A673 (cell line): ENCODE measurements at regions of chr3 and their contacts with region 1.

Region 1: DNA sequence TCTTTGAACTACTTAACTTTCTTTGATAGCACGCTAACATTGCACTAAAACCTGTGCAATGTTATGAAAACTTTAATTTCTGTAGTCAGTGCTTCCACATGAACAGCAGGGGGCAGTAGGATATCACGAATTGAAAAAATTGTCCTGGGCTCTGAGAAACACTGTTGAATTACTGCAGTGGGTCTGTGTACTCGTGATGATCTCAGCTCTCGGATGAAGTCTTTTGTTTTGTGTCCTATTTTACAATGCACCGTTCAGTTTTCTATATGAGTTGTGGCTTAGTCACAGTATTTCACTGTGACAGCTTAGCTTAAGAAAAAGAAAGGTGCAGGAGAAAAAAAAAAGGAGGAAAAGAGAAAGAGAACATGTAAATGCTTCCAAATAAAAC is 141.3 kb upstream of the CCDC54 start:
- DNase-seq: peak; percentile 86
- H3K4me3 ChIP-seq: peak overlapping the region; percentile 50
- H3K27ac ChIP-seq: peak overlapping the region; percentile 7
- H3K4me1 ChIP-seq: peaks cover 4% of the 10 kb centered on the region
- H3K27me3 ChIP-seq: no peaks in the 10 kb centered on the region
- CTCF ChIP-seq: peak; percentile 95

Region 2: DNA sequence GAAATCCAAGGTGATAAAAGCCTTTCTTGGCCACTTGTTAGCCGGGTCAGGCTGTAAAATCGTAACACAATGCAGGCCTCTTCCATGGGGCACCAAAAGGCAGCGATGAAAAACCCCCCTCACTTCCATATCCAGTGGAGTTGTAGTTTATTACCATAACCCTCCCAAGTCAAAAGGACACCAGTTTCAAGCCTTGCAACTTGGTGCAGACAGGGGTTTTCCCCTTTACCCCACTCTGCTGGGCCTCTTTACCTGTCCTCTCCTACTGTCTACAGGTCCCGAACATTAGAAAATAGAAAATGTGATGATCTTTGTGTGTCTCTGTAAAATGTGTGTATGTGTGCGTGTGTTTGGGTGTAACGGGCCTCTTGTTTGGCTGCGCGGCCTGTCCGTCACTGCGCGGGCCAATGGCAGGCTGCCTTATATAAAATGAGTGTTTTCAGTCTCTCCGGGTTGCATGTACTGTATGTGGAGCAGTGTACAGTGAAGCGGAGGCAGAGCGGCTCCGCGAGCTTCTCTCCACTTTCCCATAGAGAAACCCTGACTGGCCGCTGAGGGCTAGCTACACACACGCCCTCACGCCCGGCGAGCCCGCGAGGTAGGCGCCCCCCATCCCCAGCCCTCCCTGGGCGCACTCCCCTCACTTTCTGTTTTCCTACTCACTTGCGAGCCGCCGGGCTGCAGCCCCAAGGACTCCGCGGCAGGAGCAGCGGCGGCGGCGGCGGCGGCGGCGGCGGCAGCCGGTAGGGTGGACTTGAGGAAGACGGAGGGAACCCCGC is 286.8 kb after region 1 on chr3 and contains the start of gene BBX:
- CTCF ChIA-PET with region 1: no interaction called
- POLR2A ChIA-PET with region 1: no interaction called
- intact Hi-C with region 1: loop called (anchors 10 kb)
- DNase-seq: peak; percentile 95
- H3K4me3 ChIP-seq: peak within 1 kb of the TSS; percentile 93
- H3K27ac ChIP-seq: peak within 1 kb of the TSS; percentile 87
- H3K4me1 ChIP-seq: peaks cover 3% of the 10 kb centered on the region
- H3K27me3 ChIP-seq: no peaks in the 10 kb centered on the region
- CTCF ChIP-seq: no peak
- total RNA-seq, gene BBX: 28.9 and 37.7 TPM in 2 replicates

Region 3: DNA sequence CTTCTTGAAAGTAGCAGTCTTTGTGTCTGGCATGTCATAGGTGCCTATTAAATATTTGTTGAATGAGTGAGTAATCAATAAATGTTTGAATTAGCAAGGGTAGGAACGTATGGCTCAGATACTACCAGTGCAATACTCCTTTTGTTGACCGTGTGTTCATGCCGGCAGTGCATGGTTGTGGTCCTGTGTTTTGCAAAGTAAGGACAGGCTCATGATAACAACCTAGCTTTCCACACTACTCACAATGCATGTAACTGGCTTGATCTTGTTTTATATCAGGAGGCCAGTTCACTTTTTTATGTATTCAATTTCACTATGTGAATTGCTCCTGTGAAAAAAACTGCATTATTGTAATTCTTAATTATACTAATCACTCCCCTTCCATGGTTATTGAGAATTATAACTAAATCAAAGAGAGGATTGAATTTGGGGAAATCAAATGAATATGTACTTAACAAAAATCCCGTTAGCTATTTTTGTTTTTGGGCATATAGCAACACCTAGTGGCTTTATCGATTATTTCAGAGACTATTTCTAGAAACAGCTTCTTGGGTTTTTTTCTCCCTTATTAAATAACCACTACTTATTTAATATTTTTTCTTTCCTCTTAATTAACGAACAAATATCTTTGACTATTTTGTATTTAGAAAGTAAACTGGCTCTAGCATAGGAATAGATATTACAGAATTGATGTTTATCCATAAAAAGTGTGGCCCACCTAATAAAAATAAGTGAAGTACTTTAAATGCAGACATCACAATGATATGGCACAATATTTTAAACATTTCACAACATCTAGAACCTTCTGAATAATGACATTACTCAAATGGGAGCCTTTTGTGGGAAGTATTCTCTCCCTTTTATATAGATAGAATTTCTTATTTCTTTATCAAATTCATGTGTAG is 505.3 kb after region 1 on chr3:
- CTCF ChIA-PET with region 1: no interaction called
- POLR2A ChIA-PET with region 1: no interaction called
- intact Hi-C with region 1: loop called (anchors 10 kb)
- DNase-seq: peak; percentile 45
- H3K4me3 ChIP-seq: no peak overlapping the region
- H3K27ac ChIP-seq: no peak overlapping the region
- H3K4me1 ChIP-seq: no peaks in the 10 kb centered on the region
- H3K27me3 ChIP-seq: no peaks in the 10 kb centered on the region
- CTCF ChIP-seq: peak; percentile 62

Region 4: DNA sequence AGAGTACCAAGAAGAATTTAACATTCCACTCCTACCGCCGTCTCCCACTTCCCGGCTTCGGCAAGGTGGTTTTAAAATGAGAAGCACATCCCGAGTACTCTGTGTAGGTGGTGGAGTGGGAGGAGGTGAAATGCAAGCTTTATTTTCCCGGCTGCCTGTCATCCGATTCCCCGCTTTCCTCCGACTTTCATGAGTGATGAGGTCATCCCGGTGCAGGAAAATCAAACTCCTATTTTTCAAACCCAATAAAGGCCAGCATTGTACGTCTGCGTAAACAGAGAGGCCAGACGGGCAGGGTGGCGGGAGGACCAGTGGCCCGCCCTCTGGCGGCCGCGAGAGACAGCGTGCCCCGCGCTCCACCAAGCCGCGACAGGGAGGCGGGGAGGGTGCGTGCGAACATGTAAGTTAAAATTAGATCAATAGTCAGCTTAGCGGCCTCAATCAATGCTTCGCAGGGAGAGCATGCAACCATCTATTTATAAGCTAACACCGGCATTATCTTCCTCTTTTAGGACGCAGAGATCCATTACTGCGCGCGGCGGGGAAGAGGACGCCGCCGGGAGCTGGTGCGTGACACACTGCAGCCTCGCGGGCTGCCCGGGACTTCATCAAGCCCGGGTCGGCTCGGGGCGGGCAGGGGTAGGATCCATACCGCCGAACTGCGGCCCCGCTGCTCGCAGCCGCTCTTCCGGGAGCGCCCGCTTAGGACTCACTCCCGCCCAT is 691.6 kb after region 1 on chr3:
- CTCF ChIA-PET with region 1: interaction called, 4 read pairs
- POLR2A ChIA-PET with region 1: no interaction called
- intact Hi-C with region 1: loop called (anchors 5 kb)
- DNase-seq: peak; percentile 65
- H3K4me3 ChIP-seq: peak overlapping the region; percentile 52
- H3K27ac ChIP-seq: no peak overlapping the region
- H3K4me1 ChIP-seq: peaks cover 6% of the 10 kb centered on the region
- H3K27me3 ChIP-seq: peaks cover 43% of the 10 kb centered on the region
- CTCF ChIP-seq: peak; percentile 95